Naive thymus-derived CD4-positive, alpha-beta T cell (primary cell): ENCODE measurements at regions of chr14 and their contacts with region 1.

Region 1: DNA sequence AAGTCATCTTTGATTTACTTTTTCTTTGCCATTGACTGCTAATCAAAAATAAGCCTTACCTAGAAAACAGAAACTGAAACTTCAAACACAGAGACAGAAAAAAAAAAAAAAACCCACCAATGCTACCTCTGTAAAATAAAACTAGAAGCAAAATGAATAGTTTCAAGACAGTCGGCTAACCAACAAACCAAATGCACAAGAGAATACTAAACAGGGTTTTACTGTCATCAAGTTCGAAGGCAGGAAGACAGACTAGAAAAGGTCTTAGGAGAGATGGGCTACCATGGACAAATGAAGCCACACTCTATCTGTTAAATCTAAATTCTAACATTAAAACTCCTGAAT is 59.5 kb downstream of the SEL1L start:
- DNase-seq: peak in 5 of 9 donors; percentile 10 to 25 (median 18)
- ATAC-seq: peak; percentile 54
- H3K4me3 ChIP-seq: peak overlapping the region; percentile 4
- H3K4me3 Mint-ChIP-seq: peak overlapping the region in 9 of 10 donors; percentile 59 to 89 (median 75)
- H3K27ac ChIP-seq: peak overlapping the region; percentile 68
- H3K27ac Mint-ChIP-seq: peak overlapping the region; percentile 84 to 97 (median 91)
- H3K4me1 ChIP-seq: peaks cover 9 to 14% of the 10 kb centered on the region in 2 donors
- H3K4me1 Mint-ChIP-seq: peaks cover 19 to 58% (median 38%) of the 10 kb centered on the region in 7 donors
- H3K27me3 ChIP-seq: no peaks in the 10 kb centered on the region
- H3K27me3 Mint-ChIP-seq: no peaks in the 10 kb centered on the region

Region 2: GRCh38 chr14:81509822-81510451 is 35.8 kb after region 1 on chr14:
- CTCF ChIA-PET with region 1: no interaction called
- POLR2A ChIA-PET with region 1: no interaction called
- intact Hi-C with region 1: loop called in 1 of 2 experiments (anchors 5 kb)
- DNase-seq: no peak
- ATAC-seq: no peak
- H3K4me3 ChIP-seq: no peak overlapping the region
- H3K4me3 Mint-ChIP-seq: peak overlapping the region in 1 of 10 donors; percentile 2
- H3K27ac ChIP-seq: no peak overlapping the region
- H3K27ac Mint-ChIP-seq: peak overlapping the region in 7 of 9 donors; percentile 2 to 89 (median 59)
- H3K4me1 ChIP-seq: no peaks in the 10 kb centered on the region
- H3K4me1 Mint-ChIP-seq: peaks cover 15 to 56% (median 49%) of the 10 kb centered on the region in 7 donors
- H3K27me3 ChIP-seq: no peaks in the 10 kb centered on the region
- H3K27me3 Mint-ChIP-seq: no peaks in the 10 kb centered on the region